ENCODE measurements at regions of chr19 and their contacts with region 1.

Region 1: DNA sequence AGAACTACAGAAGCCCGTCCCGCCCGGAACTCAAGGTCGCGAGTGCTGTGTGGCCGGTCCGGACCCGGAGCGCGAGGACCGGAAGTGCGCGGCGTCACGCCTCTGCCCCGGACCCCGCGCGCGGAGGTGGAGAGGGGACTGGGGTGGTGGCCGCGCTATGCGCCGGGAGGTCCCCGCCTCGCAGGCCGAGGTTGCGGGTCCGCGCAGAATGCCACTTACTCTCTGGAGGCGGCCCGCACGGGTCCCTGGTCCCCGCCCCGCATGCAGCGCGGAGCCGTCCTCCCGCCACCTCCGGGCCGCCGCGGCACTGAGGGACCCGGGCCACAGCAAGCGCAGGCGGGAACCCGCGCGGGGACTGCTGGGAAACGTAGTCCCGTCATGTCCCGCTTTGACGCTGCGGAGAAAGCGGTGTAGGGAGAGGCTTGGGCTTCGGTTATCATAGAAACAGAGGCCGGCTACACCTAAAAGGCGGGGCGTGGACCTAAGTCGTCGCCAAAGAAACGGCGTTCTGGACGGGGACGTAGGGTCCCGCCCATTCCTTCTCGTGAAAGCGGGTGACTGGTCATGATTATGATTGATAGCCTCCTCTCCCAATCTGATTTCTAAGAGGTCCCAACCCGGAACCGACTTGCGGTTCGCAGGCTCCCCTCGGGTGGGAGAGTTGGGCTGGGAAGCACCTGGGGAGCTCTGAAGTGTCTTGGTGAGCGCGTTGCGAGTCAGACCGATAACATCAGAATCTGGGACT is at the start of gene ZNF837:
- DNase-seq: peak; percentile 98
- H3K4me3 Mint-ChIP-seq: peak within 1 kb of the TSS; percentile 87
- H3K27ac Mint-ChIP-seq: peak within 1 kb of the TSS; percentile 89
- H3K4me1 Mint-ChIP-seq: peaks cover 22% of the 10 kb centered on the region
- H3K27me3 Mint-ChIP-seq: no peaks in the 10 kb centered on the region
- total RNA-seq, gene ZNF837: 0.86 and 1.4 TPM in 2 replicates

Region 2: GRCh38 chr19:57819475-57820148 is 561.3 kb before region 1 on chr19:
- intact Hi-C with region 1: loop called (anchors 10 kb)
- DNase-seq: peak; percentile 76
- H3K4me3 Mint-ChIP-seq: peak overlapping the region; percentile 99
- H3K27ac Mint-ChIP-seq: peak overlapping the region; percentile 98
- H3K4me1 Mint-ChIP-seq: peaks cover 50% of the 10 kb centered on the region
- H3K27me3 Mint-ChIP-seq: no peaks in the 10 kb centered on the region

Region 3: GRCh38 chr19:58346961-58347931 is 33.6 kb before region 1 on chr19:
- intact Hi-C with region 1: loop called (anchors 1 kb)
- DNase-seq: peak; percentile 63
- H3K4me3 Mint-ChIP-seq: peak overlapping the region; percentile 92
- H3K27ac Mint-ChIP-seq: peak overlapping the region; percentile 83
- H3K4me1 Mint-ChIP-seq: peaks cover 29% of the 10 kb centered on the region
- H3K27me3 Mint-ChIP-seq: no peaks in the 10 kb centered on the region

Region 4: GRCh38 chr19:58395220-58396029 is 14.5 kb after region 1 on chr19 and contains the start of gene RNF225:
- intact Hi-C with region 1: no loop called
- DNase-seq: no peak
- H3K4me3 Mint-ChIP-seq: no peak within 1 kb of the TSS
- H3K27ac Mint-ChIP-seq: no peak within 1 kb of the TSS
- H3K4me1 Mint-ChIP-seq: peaks cover 19% of the 10 kb centered on the region
- H3K27me3 Mint-ChIP-seq: peaks cover 5% of the 10 kb centered on the region
- total RNA-seq, gene RNF225: 0.65 and 1.6 TPM in 2 replicates

Region 5: DNA sequence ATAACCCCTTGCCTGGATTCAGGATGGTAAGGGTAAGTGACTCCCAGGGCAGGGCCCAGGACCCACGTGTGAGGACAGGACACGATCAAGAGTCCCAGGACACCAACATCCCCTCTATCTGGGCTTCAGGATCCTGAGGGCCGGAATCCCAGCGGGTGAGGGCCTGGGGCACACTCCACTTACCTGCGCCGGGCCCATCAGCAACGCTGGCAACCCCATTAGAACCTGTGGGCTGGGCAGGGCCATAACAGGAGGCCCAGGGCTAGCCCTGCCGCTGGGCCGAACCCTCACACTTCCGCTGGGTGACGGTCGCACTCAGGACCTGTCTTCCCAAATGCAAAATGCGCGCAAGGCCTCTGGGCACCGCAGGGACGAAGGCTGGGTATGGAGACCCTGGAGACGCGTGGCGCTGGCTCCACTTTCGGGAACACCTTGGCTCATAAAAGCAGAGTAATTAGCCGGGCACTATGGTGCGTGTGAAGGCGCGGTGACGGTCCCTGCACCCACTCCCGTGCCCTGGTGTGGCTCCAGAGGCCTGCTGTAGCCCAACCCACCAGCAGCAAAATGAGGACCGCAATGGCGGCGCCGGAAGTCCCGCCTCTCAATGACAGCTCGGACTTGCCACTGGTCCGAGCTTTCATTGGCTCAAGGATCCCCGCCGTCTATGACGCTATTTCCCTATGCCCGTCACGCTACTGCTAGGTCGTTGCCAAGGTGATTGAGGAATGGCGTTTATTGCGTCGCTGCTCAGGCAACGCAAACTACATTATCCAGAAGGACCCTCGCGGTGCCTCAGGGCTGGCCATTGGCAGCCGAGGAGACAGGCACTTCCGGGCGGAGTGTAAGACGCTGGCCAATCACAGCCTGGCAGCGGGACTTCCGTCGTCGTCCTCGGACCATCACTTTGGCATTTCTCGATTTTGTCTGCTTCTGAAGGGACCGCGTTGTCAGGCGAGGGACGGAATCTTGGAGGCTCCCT is 59.0 kb after region 1 on chr19 and contains the start of gene ZNF132:
- intact Hi-C with region 1: loop called (anchors 1 kb)
- DNase-seq: peak; percentile 94
- H3K4me3 Mint-ChIP-seq: peak within 1 kb of the TSS; percentile 97
- H3K27ac Mint-ChIP-seq: peak within 1 kb of the TSS; percentile 98
- H3K4me1 Mint-ChIP-seq: peaks cover 24% of the 10 kb centered on the region
- H3K27me3 Mint-ChIP-seq: no peaks in the 10 kb centered on the region
- total RNA-seq, gene ZNF132: 3.4 and 3.5 TPM in 2 replicates

Region 6: GRCh38 chr19:58475714-58476497 is 95.0 kb after region 1 on chr19 and contains the start of gene ZNF446:
- intact Hi-C with region 1: loop called (anchors 1 kb)
- DNase-seq: peak; percentile 95
- H3K4me3 Mint-ChIP-seq: peak within 1 kb of the TSS; percentile 88
- H3K27ac Mint-ChIP-seq: peak within 1 kb of the TSS; percentile 99
- H3K4me1 Mint-ChIP-seq: peaks cover 25% of the 10 kb centered on the region
- H3K27me3 Mint-ChIP-seq: no peaks in the 10 kb centered on the region
- total RNA-seq, gene ZNF446: 6.6 and 6.7 TPM in 2 replicates

Region 7: GRCh38 chr19:58558623-58559274 is 177.9 kb after region 1 on chr19:
- intact Hi-C with region 1: loop called (anchors 1 kb)
- DNase-seq: peak; percentile 100
- H3K4me3 Mint-ChIP-seq: peak overlapping the region; percentile 95
- H3K27ac Mint-ChIP-seq: peak overlapping the region; percentile 99
- H3K4me1 Mint-ChIP-seq: peaks cover 66% of the 10 kb centered on the region
- H3K27me3 Mint-ChIP-seq: peaks cover 1% of the 10 kb centered on the region

Measured in activated T-helper 1 cell treated with anti-CD3 and anti-CD28 coated beads, Interleukin-12 subunit alpha, Interleukin-12 subunit beta, Interleukin-2, Interleukin-4 antibody, amounts not matched to agents 30 ng/mL and 10 ng/mL and 1 ng/mL, durations not matched to agents 14 hours and 24 hours and 36 hours (primary cell).